ENCODE measurements at regions of chr10 and their contacts with region 1.

Region 1: DNA sequence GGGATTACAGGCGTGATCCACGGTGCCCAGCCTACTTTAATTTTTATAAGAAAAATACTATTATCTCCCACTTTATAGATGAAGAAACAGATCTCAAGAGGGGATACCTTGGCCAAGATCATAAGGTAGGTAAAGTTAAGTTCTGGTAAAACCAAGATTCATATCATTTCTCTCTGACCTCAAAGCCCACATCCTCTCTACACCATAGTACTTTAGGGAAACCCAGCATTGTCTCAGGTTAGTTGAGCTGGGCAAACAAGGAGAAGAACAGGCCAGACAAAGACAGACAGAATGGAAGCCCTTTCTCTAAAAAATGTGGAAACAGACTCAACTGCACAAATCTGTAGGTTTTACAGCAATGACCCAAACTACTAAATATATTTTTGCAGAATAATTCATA is 197.7 kb upstream of the FRMD4A start:
- DNase-seq: no peak
- ATAC-seq: peak; percentile 66
- H3K4me3 Mint-ChIP-seq: no peak overlapping the region
- H3K27ac Mint-ChIP-seq: peak overlapping the region; percentile 29
- H3K4me1 Mint-ChIP-seq: peaks cover 87% of the 10 kb centered on the region
- H3K27me3 Mint-ChIP-seq: no peaks in the 10 kb centered on the region

Region 2: DNA sequence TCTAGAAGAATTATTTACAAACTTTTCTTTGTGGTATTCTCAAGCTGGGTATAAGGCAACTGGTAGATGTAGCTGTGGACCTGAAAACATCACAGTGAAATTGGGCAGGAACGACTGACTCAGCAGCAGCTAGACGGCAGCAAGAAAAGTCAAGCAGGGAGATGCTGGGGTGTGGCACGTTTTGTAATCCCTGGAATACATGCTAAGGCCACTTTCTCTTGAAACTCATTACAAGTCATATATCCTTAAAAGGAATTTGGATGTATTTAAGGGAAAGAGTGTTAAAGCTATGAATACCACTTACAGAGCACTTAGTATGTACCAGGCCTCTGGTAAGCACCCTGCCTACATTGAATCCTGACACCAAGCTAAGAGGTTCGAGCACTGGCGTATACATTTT is 1017.0 kb before region 1 on chr10:
- CTCF ChIA-PET with region 1: no interaction called
- POLR2A ChIA-PET with region 1: no interaction called
- intact Hi-C with region 1: no loop called
- DNase-seq: no peak
- ATAC-seq: no peak
- H3K4me3 Mint-ChIP-seq: no peak overlapping the region
- H3K27ac Mint-ChIP-seq: no peak overlapping the region
- H3K4me1 Mint-ChIP-seq: no peaks in the 10 kb centered on the region
- H3K27me3 Mint-ChIP-seq: peaks cover 15% of the 10 kb centered on the region

Region 3: DNA sequence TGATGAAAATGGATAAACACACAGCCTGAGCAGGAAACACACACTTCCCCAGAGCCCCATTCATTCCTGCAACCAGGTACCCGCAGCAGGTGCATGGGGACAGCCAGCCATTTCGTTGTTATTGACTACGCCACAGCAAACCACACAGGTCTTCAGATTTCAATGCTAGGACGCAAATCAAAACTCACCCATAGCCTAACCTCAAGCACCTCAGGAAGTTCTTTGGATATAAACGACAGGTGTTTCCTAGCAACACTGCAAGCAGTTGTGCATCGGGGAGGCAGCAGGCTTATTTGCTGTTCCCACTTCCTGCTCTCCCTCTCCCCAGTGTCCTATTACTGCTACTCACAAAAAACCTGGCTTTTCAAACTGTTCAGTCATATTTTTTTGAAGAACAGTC is 21.3 kb before region 1 on chr10:
- CTCF ChIA-PET with region 1: interaction called, 6 read pairs
- POLR2A ChIA-PET with region 1: no interaction called
- intact Hi-C with region 1: loop called (anchors 1 to 2 kb)
- DNase-seq: peak; percentile 58
- ATAC-seq: peak; percentile 50
- H3K4me3 Mint-ChIP-seq: peak overlapping the region; percentile 30
- H3K27ac Mint-ChIP-seq: peak overlapping the region; percentile 72
- H3K4me1 Mint-ChIP-seq: peaks cover 43% of the 10 kb centered on the region
- H3K27me3 Mint-ChIP-seq: no peaks in the 10 kb centered on the region

Region 4: GRCh38 chr10:14543046-14543903 is 14.8 kb after region 1 on chr10:
- CTCF ChIA-PET with region 1: interaction called, 12 read pairs
- POLR2A ChIA-PET with region 1: no interaction called
- intact Hi-C with region 1: no loop called
- DNase-seq: peak; percentile 60
- ATAC-seq: peak; percentile 81
- H3K4me3 Mint-ChIP-seq: peak overlapping the region; percentile 62
- H3K27ac Mint-ChIP-seq: peak overlapping the region; percentile 90
- H3K4me1 Mint-ChIP-seq: peaks cover 79% of the 10 kb centered on the region
- H3K27me3 Mint-ChIP-seq: no peaks in the 10 kb centered on the region

Region 5: DNA sequence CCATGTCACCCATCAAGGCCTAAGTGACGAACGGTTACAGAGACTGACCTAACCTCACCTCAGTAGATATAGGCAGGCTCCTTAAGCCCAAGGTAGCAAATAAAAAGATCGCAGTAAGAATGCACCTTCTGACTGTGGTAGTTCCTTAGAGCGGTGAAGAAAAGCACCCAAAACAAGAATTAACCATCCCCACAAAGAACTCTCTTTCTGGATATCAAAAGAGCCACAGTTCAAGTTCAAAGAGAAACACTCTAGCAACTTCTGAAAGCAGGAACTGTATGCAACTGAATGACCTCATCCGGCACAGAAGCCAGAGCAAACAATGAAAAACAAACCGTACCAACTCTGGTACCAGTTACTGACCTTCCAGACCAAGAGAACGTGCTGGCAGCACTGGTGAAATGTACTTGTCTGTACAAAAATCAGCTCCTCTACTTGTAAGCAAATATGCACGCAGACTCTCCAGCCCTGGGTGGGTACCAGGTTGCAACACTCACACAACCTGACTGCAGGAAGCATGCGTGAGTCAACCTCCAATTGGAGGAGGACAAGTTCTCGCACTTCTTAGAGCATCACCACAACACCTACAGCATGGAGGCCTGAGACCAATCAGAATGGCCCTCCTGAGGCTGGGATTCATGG is 43.5 kb after region 1 on chr10:
- CTCF ChIA-PET with region 1: no interaction called
- POLR2A ChIA-PET with region 1: no interaction called
- intact Hi-C with region 1: loop called in 1 of 2 experiments (anchors 5 kb)
- DNase-seq: peak; percentile 78
- ATAC-seq: peak; percentile 88
- H3K4me3 Mint-ChIP-seq: peak overlapping the region; percentile 66
- H3K27ac Mint-ChIP-seq: peak overlapping the region; percentile 93
- H3K4me1 Mint-ChIP-seq: peaks cover 93% of the 10 kb centered on the region
- H3K27me3 Mint-ChIP-seq: no peaks in the 10 kb centered on the region

Region 6: GRCh38 chr10:14635043-14635710 is 106.7 kb after region 1 on chr10:
- CTCF ChIA-PET with region 1: no interaction called
- POLR2A ChIA-PET with region 1: no interaction called
- intact Hi-C with region 1: no loop called
- DNase-seq: no peak
- ATAC-seq: no peak
- H3K4me3 Mint-ChIP-seq: no peak overlapping the region
- H3K27ac Mint-ChIP-seq: no peak overlapping the region
- H3K4me1 Mint-ChIP-seq: peaks cover under 1% of the 10 kb centered on the region
- H3K27me3 Mint-ChIP-seq: no peaks in the 10 kb centered on the region

Measured in activated CD4-positive, alpha-beta T cell treated with anti-CD3 and anti-CD28 coated beads for 36 hours (primary cell).